Activated CD4-positive, alpha-beta T cell treated with anti-CD3 and anti-CD28 coated beads for 36 hours (primary cell): ENCODE measurements at regions of chr18 and their contacts with region 1.

Region 1: GRCh38 chr18:4581966-4582365 is 126.9 kb upstream of the DLGAP1 start:
- DNase-seq: no peak
- ATAC-seq: no peak
- H3K4me3 Mint-ChIP-seq: no peak overlapping the region
- H3K27ac Mint-ChIP-seq: no peak overlapping the region
- H3K4me1 Mint-ChIP-seq: no peaks in the 10 kb centered on the region
- H3K27me3 Mint-ChIP-seq: no peaks in the 10 kb centered on the region

Region 2: DNA sequence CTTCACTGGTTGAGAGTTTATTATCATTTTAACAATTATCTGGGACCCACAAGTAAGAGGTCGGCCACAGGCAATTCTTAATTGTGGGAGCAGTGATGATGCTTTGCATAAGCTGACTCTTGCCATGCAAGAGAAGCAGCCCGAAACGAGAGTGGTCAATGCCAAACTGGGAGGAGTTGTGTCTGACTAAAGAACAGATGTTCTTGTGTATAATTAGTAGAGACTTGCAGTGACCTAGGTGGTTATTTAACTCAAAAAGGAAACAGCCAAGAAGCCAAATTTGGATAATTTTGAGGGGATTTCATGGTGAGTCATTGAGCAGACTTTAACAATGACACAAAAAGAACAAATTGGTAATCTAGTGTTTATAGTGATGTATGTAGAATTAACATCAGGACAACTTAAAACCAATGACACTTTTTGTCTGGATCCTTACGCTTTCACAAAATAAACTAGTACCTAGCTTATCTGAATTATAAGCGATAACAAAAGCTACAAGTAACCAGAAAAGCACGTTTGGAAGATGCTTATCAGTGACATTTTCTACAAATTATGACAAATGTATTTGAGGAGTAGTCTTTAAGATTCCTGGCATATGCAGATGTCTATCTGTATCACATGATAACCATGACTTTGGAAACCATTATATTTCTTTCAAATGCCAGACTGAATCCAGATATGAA is 57.8 kb after region 1 on chr18:
- CTCF ChIA-PET with region 1: no interaction called
- POLR2A ChIA-PET with region 1: no interaction called
- intact Hi-C with region 1: loop called in 1 of 2 experiments (anchors 5 kb)
- DNase-seq: no peak
- ATAC-seq: no peak
- H3K4me3 Mint-ChIP-seq: no peak overlapping the region
- H3K27ac Mint-ChIP-seq: no peak overlapping the region
- H3K4me1 Mint-ChIP-seq: no peaks in the 10 kb centered on the region
- H3K27me3 Mint-ChIP-seq: no peaks in the 10 kb centered on the region